PC-9 (cell line): ENCODE measurements at regions of chr1 and their contacts with region 1.

Region 1: DNA sequence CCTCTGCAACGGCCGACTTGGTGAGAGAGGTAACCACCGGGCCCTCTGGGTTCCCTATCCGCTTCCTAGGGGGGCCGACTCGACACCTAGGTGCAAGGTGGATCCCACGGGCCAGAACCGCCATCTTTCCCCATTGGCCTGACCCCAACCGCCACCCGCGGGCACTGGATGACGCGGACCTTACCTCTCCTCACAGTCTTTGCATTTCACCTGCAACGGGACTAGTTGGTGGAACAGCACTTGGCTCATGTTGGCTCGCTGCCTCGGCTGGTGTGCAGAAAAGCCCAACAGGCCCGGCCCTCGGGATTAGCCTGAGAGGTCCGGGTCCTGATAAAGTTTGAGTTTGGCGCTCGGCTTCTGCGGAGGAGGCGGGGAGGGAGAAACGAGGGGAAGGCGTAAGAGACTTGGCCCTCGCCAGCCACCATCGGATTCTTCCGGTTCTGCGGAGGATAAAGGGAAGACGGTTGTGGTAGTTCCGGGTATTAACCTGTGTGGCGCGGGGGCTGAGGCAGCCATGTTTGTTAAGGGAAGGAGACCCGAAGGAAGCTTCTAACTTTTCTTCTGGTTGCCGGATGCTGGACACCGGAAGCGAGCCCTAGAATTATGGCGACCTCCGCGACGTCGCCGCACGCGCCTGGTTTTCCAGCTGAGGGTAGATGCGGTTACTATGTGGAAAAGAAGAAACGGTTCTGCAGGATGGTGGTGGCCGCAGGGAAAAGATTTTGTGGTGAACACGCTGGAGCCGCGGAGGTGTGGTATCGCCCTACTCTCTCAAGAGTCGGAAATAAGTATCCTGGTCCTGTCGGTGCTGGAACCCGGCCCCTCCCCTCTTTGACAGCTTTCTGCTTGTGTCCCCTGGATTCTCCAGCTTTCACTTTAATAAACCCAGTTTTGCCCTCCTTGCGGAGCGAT is at the starts of genes SASS6 and TRMT13:
- DNase-seq: peak; percentile 91 to 98
- H3K4me3 ChIP-seq: peak within 1 kb of the TSS; percentile 87
- H3K27ac ChIP-seq: peak within 1 kb of the TSS; percentile 40
- H3K4me1 ChIP-seq: peaks cover 34% of the 10 kb centered on the region
- H3K27me3 ChIP-seq: no peaks in the 10 kb centered on the region
- CTCF ChIP-seq: no peak
- total RNA-seq, gene SASS6: 5.1 and 8.7 TPM in 2 replicates
- total RNA-seq, gene TRMT13: 7.3 and 14.2 TPM in 2 replicates

Region 2: DNA sequence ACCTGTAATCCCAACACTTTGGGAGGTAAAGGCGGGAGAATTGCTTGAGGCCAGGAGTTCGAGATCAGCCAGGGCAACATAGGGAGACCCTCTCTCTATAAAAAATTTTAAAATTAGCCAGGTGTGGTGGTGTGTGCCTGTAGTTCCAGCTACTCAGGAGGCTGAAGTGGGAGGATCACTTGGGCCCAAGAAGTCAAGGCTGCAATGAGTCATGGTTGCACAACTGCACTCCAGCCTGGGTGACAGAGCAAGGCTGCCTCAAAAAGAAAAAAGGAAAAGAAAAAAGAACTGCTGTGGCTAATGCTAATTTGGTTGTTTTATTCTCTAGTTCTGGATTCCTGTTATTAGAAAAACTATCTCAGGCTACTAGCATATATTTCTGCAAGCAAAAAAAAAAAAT is 87.1 kb after region 1 on chr1:
- CTCF ChIA-PET with region 1: no interaction called
- POLR2A ChIA-PET with region 1: interaction called, 10 read pairs
- intact Hi-C with region 1: no loop called
- DNase-seq: no peak
- H3K4me3 ChIP-seq: no peak overlapping the region
- H3K27ac ChIP-seq: no peak overlapping the region
- H3K4me1 ChIP-seq: no peaks in the 10 kb centered on the region
- H3K27me3 ChIP-seq: no peaks in the 10 kb centered on the region
- CTCF ChIP-seq: no peak

Region 3: GRCh38 chr1:101025283-101025656 is 892.4 kb after region 1 on chr1:
- CTCF ChIA-PET with region 1: no interaction called
- POLR2A ChIA-PET with region 1: no interaction called
- intact Hi-C with region 1: no loop called
- DNase-seq: no peak
- H3K4me3 ChIP-seq: peak overlapping the region; percentile 75
- H3K27ac ChIP-seq: peak overlapping the region; percentile 77
- H3K4me1 ChIP-seq: peaks cover 18% of the 10 kb centered on the region
- H3K27me3 ChIP-seq: no peaks in the 10 kb centered on the region
- CTCF ChIP-seq: no peak